Gastrocnemius medialis (tissue), 4 donors: ENCODE measurements at regions of chr10 and their contacts with region 1.

Region 1: DNA sequence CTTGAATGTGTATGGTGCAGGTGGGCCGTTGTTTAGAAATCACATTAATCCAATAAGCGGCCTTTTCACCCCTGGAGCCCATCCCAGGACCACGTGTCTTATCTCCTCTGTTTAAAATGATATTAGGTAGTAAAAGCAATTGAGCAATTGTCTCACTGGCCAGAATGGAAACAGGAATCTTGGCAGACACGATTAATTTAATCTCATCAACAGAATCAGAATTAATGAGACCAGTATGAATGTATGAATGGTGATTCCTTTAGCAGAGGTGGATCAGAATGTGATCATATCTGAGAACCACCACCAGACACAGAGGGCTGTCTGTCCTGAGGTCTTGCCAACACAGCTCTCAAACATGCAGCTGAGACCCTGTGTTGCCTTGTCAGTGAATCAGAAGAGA is 1591.4 kb downstream of the REEP3 start:
- DNase-seq: no peak
- ATAC-seq: no peak
- H3K4me3 ChIP-seq: no peak overlapping the region
- H3K27ac ChIP-seq: no peak overlapping the region
- H3K4me1 ChIP-seq: no peaks in the 10 kb centered on the region
- H3K27me3 ChIP-seq: no peaks in the 10 kb centered on the region
- CTCF ChIP-seq: no peak
- POLR2A ChIP-seq: no peak

Region 2: DNA sequence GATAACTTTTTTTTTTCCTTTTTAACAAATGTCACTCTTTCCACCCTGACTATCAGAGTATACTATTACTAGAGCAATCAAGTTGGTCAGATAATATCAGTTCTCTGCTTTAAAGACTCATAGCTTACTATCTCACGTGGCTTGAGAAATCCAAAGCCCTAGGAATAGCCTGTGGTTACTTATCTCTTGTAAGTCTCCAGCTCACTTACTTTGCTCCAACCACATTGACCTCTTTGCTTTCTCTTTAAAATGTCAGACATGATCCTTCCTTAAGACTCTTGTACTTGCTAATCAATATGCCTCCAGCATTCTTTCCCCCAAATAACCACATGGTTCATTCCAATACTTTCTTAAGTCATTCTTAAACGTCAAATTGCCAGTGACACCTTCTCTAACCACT is 299.2 kb before region 1 on chr10:
- in situ Hi-C with region 1: no loop called
- intact Hi-C with region 1: no loop called
- DNase-seq: no peak
- ATAC-seq: no peak
- H3K4me3 ChIP-seq: no peak overlapping the region
- H3K27ac ChIP-seq: no peak overlapping the region
- H3K4me1 ChIP-seq: no peaks in the 10 kb centered on the region
- H3K27me3 ChIP-seq: no peaks in the 10 kb centered on the region
- CTCF ChIP-seq: no peak
- POLR2A ChIP-seq: no peak

Region 3: DNA sequence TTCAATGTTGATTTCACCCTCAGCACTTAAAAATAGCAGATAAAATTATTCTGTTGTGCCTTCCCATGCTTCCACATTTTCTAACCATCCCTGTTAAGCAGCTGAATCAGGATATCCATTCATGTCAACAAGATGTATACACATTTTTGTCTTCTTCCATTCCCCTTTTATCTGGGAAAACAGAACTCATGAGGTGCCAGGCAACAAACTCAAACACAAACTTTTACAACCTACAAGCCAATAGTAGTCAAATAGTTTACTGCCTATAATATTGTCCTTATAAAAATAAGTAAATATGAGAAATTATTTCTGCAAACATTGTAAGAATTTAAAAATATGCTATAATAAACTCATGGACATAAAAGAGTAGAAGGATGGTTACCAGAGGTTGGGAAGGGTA is 21.6 kb before region 1 on chr10:
- in situ Hi-C with region 1: no loop called
- intact Hi-C with region 1: loop called (anchors 2 kb)
- DNase-seq: no peak
- ATAC-seq: no peak
- H3K4me3 ChIP-seq: no peak overlapping the region
- H3K27ac ChIP-seq: no peak overlapping the region
- H3K4me1 ChIP-seq: no peaks in the 10 kb centered on the region
- H3K27me3 ChIP-seq: no peaks in the 10 kb centered on the region
- CTCF ChIP-seq: no peak
- POLR2A ChIP-seq: no peak